A673 (cell line): ENCODE measurements at regions of chr19 and their contacts with region 1.

Region 1: GRCh38 chr19:47273313-47273977 is 1.2 kb upstream of the INAFM1 start:
- DNase-seq: peak; percentile 96
- H3K4me3 ChIP-seq: peak overlapping the region; percentile 65
- H3K27ac ChIP-seq: peak overlapping the region; percentile 99
- H3K4me1 ChIP-seq: peaks cover 17% of the 10 kb centered on the region
- H3K27me3 ChIP-seq: no peaks in the 10 kb centered on the region
- CTCF ChIP-seq: no peak

Region 2: GRCh38 chr19:47256688-47257443 is 16.6 kb before region 1 on chr19:
- CTCF ChIA-PET with region 1: no interaction called
- POLR2A ChIA-PET with region 1: interaction called, 6 read pairs
- intact Hi-C with region 1: loop called (anchors 1 kb)
- DNase-seq: peak; percentile 99
- H3K4me3 ChIP-seq: peak overlapping the region; percentile 52
- H3K27ac ChIP-seq: peak overlapping the region; percentile 88
- H3K4me1 ChIP-seq: peaks cover 7% of the 10 kb centered on the region
- H3K27me3 ChIP-seq: no peaks in the 10 kb centered on the region
- CTCF ChIP-seq: no peak

Region 3: DNA sequence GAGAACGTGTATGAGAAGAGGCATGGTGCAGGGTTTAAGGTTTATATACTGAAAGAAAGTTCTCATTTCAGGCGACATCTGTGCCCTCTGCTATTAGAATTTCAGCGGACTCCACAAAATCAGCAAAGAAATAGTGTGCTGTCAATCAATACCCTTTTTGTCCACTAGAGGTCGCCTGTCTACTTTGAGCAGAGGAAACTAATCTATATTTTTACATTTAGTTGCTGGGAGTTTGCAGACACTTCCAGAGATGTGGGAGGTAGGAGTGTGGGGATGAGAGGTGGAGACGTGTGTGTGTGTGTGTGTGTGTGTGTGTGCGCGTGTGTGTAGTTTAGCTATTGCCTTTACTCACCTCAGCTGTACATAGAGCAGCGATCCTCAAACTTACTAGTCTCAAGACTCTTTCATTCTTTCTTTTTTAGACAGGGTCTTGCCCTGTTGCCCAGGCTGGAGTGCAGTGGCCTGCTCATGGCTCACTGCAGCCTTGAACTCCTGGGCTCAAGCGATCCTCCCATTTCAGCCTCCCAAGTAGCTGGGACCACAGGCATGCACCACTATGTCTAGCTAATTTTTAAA is 11.0 kb after region 1 on chr19:
- CTCF ChIA-PET with region 1: interaction called, 12 read pairs
- POLR2A ChIA-PET with region 1: no interaction called
- intact Hi-C with region 1: no loop called
- DNase-seq: peak; percentile 79
- H3K4me3 ChIP-seq: no peak overlapping the region
- H3K27ac ChIP-seq: no peak overlapping the region
- H3K4me1 ChIP-seq: peaks cover 5% of the 10 kb centered on the region
- H3K27me3 ChIP-seq: no peaks in the 10 kb centered on the region
- CTCF ChIP-seq: peak; percentile 92

Region 4: GRCh38 chr19:47296036-47296435 is 22.6 kb after region 1 on chr19:
- CTCF ChIA-PET with region 1: no interaction called
- POLR2A ChIA-PET with region 1: no interaction called
- intact Hi-C with region 1: no loop called
- DNase-seq: peak; percentile 87
- H3K4me3 ChIP-seq: no peak overlapping the region
- H3K27ac ChIP-seq: no peak overlapping the region
- H3K4me1 ChIP-seq: no peaks in the 10 kb centered on the region
- H3K27me3 ChIP-seq: no peaks in the 10 kb centered on the region
- CTCF ChIP-seq: peak; percentile 80

Region 5: GRCh38 chr19:47340477-47341208 is 67.2 kb after region 1 on chr19:
- CTCF ChIA-PET with region 1: no interaction called
- POLR2A ChIA-PET with region 1: no interaction called
- intact Hi-C with region 1: no loop called
- DNase-seq: no peak
- H3K4me3 ChIP-seq: no peak overlapping the region
- H3K27ac ChIP-seq: no peak overlapping the region
- H3K4me1 ChIP-seq: no peaks in the 10 kb centered on the region
- H3K27me3 ChIP-seq: no peaks in the 10 kb centered on the region
- CTCF ChIP-seq: no peak